ENCODE measurements at regions of chr22 and their contacts with region 1.

Region 1: GRCh38 chr22:26450453-26451185 is 21.6 kb downstream of the ASPHD2 start:
- DNase-seq: no peak
- H3K4me3 ChIP-seq: no peak overlapping the region
- H3K27ac ChIP-seq: no peak overlapping the region
- H3K4me1 ChIP-seq: no peaks in the 10 kb centered on the region
- H3K27me3 ChIP-seq: no peaks in the 10 kb centered on the region
- CTCF ChIP-seq: no peak
- EP300 ChIP-seq: no peak
- POLR2A ChIP-seq: no peak

Region 2: GRCh38 chr22:26404851-26405421 is 45.7 kb before region 1 on chr22:
- in situ Hi-C with region 1: loop called in 1 of 4 experiments (anchors 5 kb)
- intact Hi-C with region 1: no loop called
- DNase-seq: no peak
- H3K4me3 ChIP-seq: no peak overlapping the region
- H3K27ac ChIP-seq: no peak overlapping the region
- H3K4me1 ChIP-seq: no peaks in the 10 kb centered on the region
- H3K27me3 ChIP-seq: peaks cover 16% of the 10 kb centered on the region
- CTCF ChIP-seq: no peak
- EP300 ChIP-seq: no peak
- POLR2A ChIP-seq: no peak

Region 3: GRCh38 chr22:26416670-26417250 is 33.9 kb before region 1 on chr22:
- in situ Hi-C with region 1: no loop called
- intact Hi-C with region 1: no loop called
- DNase-seq: no peak
- H3K4me3 ChIP-seq: no peak overlapping the region
- H3K27ac ChIP-seq: peak overlapping the region in 1 of 4 donors; percentile 55
- H3K4me1 ChIP-seq: peaks cover 0 to 18% (median 3%) of the 10 kb centered on the region in 4 donors
- H3K27me3 ChIP-seq: peaks cover 23% of the 10 kb centered on the region
- CTCF ChIP-seq: no peak
- EP300 ChIP-seq: no peak
- POLR2A ChIP-seq: no peak

Region 4: GRCh38 chr22:26589845-26590736 is 139.5 kb after region 1 on chr22 and contains the start of gene TPST2:
- in situ Hi-C with region 1: no loop called
- intact Hi-C with region 1: no loop called
- DNase-seq: peak; percentile 85
- H3K4me3 ChIP-seq: peak within 1 kb of the TSS; percentile 65 to 94 (median 85)
- H3K27ac ChIP-seq: peak within 1 kb of the TSS; percentile 84 to 90 (median 86)
- H3K4me1 ChIP-seq: peaks cover 0 to 37% (median 6%) of the 10 kb centered on the region in 4 donors
- H3K27me3 ChIP-seq: no peaks in the 10 kb centered on the region
- CTCF ChIP-seq: no peak
- EP300 ChIP-seq: no peak
- POLR2A ChIP-seq: peak; percentile 68
- total RNA-seq, gene TPST2: 14.3 to 35.6 (median 26.8) TPM

Region 5: DNA sequence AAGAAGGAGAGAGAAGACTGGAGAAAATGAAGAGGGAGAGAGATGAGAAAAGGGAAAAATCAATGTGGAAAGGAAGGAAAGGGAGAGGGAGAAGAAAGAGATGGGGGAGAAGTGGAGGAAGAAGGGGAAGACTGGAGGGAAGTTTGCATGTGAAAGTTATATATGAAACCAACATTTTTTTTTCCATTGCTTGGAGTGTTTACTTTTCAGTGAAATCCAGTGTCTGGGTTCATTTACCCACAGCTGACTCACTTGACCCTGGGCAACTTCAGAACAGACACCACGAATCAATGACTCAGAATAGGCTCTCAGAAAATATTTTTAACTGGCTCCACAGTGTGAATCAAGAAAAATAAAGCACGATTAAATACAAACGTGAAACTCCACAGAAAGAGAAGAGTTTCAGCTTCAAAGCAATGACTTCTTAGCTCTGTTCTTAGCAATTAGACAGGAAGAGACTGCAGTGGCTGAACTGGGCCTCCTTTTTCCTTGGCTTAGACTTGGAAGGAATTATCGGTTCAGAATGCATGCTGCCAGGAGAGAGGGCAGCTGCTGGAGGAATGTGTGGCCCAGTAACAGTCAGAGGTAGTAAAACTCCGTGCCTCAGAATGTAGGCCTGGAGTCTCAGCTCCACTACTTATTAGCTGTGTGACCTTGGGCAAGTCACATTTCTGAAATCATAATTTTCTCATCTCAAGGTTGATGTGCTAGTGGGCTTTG is 444.3 kb after region 1 on chr22:
- in situ Hi-C with region 1: no loop called
- intact Hi-C with region 1: no loop called
- DNase-seq: no peak
- H3K4me3 ChIP-seq: no peak overlapping the region
- H3K27ac ChIP-seq: peak overlapping the region in 3 of 4 donors; percentile 25 to 57 (median 54)
- H3K4me1 ChIP-seq: peaks cover 0 to 8% (median 0%) of the 10 kb centered on the region in 4 donors
- H3K27me3 ChIP-seq: peaks cover 8% of the 10 kb centered on the region
- CTCF ChIP-seq: no peak
- EP300 ChIP-seq: no peak
- POLR2A ChIP-seq: no peak

Measured in transverse colon (tissue), 4 donors.